Thyroid gland (tissue), 4 donors: ENCODE measurements at regions of chr12 and their contacts with region 1.

Region 1: GRCh38 chr12:69157023-69157655 is 82.2 kb upstream of the CPSF6 start:
- DNase-seq: peak; percentile 79 to 87
- H3K4me3 ChIP-seq: no peak overlapping the region
- H3K27ac ChIP-seq: no peak overlapping the region
- H3K4me1 ChIP-seq: peaks cover 0 to 6% of the 10 kb centered on the region in 2 donors
- H3K27me3 ChIP-seq: no peaks in the 10 kb centered on the region
- CTCF ChIP-seq: peak; percentile 66 to 96 (median 79)
- POLR2A ChIP-seq: no peak

Region 2: GRCh38 chr12:68786929-68787328 is 370.2 kb before region 1 on chr12:
- intact Hi-C with region 1: no loop called
- DNase-seq: no peak
- H3K4me3 ChIP-seq: no peak overlapping the region
- H3K27ac ChIP-seq: peak overlapping the region; percentile 25 to 43 (median 37)
- H3K4me1 ChIP-seq: peaks cover 0 to 4% of the 10 kb centered on the region in 2 donors
- H3K27me3 ChIP-seq: no peaks in the 10 kb centered on the region
- CTCF ChIP-seq: no peak
- POLR2A ChIP-seq: no peak

Region 3: DNA sequence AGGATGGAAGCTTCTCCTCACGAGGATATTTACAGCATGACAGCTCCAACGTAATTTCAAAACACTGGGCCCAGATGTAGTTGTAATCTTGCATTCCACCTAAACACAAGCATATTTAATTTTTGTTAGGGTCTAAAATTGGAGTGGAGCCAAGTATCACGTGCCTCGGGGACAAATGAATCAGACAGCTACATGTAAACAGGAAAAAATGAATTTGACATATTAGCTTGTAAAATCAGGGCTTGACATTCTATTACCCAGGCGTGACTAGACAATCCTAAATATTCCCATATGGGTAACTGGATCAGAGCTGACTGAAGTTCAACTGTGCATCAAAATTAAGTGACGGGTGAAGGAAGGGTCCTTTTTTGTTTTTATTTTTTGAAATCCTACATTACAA is 290.2 kb before region 1 on chr12:
- intact Hi-C with region 1: loop called (anchors 10 kb)
- DNase-seq: no peak
- H3K4me3 ChIP-seq: no peak overlapping the region
- H3K27ac ChIP-seq: no peak overlapping the region
- H3K4me1 ChIP-seq: peaks cover 0 to 3% of the 10 kb centered on the region in 2 donors
- H3K27me3 ChIP-seq: no peaks in the 10 kb centered on the region
- CTCF ChIP-seq: no peak
- POLR2A ChIP-seq: no peak

Region 4: DNA sequence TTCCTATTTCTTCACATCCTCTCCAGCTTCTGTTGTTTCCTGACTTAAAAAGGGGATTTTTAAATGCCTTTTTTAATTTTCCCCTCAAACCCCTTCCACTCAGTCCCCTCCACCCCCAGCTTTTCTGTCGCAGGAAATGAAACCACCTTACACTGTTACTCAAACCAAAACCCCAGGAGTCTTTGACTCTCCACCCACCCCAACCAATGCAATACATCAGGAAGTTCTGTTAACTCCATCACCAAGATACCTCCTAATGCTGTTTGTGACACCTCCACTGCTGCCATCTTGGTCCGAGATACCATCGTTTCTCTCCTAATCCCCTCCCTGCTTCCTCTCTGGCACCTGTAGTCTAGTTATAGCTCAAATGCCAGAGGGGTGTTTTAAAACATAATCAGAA is 198.8 kb before region 1 on chr12:
- intact Hi-C with region 1: no loop called
- DNase-seq: no peak
- H3K4me3 ChIP-seq: no peak overlapping the region
- H3K27ac ChIP-seq: no peak overlapping the region
- H3K4me1 ChIP-seq: peaks cover 0 to 12% of the 10 kb centered on the region in 2 donors
- H3K27me3 ChIP-seq: no peaks in the 10 kb centered on the region
- CTCF ChIP-seq: no peak
- POLR2A ChIP-seq: no peak

Region 5: GRCh38 chr12:69254046-69254445 is 96.9 kb after region 1 on chr12:
- intact Hi-C with region 1: loop called (anchors 10 kb)
- DNase-seq: no peak
- H3K4me3 ChIP-seq: no peak overlapping the region
- H3K27ac ChIP-seq: no peak overlapping the region
- H3K4me1 ChIP-seq: no peaks in the 10 kb centered on the region
- H3K27me3 ChIP-seq: no peaks in the 10 kb centered on the region
- CTCF ChIP-seq: peak in 3 of 6 experiments; percentile 56 to 64 (median 57)
- POLR2A ChIP-seq: no peak